Activated T-helper 1 cell treated with anti-CD3 and anti-CD28 coated beads, Interleukin-12 subunit alpha, Interleukin-12 subunit beta, Interleukin-2, Interleukin-4 antibody, amounts not matched to agents 30 ng/mL and 10 ng/mL and 1 ng/mL, durations not matched to agents 14 hours and 24 hours and 36 hours (primary cell): ENCODE measurements at regions of chr12 and their contacts with region 1.

Region 1: DNA sequence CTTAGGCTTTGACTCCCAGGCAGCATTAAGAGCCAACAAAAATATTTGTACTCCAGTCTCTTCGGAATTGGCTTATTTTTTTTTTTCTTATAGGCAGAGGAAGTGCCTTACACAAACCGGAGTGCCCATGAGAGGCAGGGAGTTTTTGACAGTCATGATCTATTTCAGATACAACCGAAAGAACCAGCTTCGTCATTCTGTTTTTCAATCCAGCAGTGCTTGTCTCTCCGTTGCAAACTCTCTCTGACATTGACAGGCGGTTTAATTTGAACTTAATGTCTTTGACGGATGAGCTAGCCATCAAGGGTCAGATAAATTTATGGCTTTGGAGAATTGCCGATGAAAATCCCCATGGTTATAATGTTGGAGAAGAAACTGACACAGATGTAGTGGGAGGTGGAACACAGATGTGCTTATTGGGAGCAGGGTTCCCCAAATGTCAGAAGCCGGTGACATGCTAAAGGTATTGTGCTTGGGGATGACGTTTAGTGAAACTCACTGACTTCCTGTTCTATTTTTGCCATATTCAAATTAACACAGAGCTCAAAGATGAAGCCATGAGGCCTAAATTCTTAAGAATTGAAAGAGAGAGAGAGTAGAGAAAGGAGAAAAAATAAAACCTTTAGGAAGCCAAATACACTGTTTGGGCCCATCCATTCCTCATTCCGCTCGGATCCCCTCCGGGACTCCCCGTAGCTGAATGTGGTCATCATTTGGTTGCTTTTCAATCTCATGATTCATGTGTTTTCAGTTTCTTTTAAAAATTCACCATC is 59.7 kb downstream of the PLXNC1 start:
- DNase-seq: peak; percentile 46
- H3K4me3 Mint-ChIP-seq: peak overlapping the region; percentile 79
- H3K27ac Mint-ChIP-seq: peak overlapping the region; percentile 100
- H3K4me1 Mint-ChIP-seq: peaks cover 73% of the 10 kb centered on the region
- H3K27me3 Mint-ChIP-seq: no peaks in the 10 kb centered on the region

Region 2: GRCh38 chr12:93785262-93786010 is 422.6 kb before region 1 on chr12:
- intact Hi-C with region 1: loop called (anchors 10 kb)
- DNase-seq: peak; percentile 53
- H3K4me3 Mint-ChIP-seq: peak overlapping the region; percentile 67
- H3K27ac Mint-ChIP-seq: peak overlapping the region; percentile 82
- H3K4me1 Mint-ChIP-seq: peaks cover 51% of the 10 kb centered on the region
- H3K27me3 Mint-ChIP-seq: no peaks in the 10 kb centered on the region

Region 3: GRCh38 chr12:94230357-94230905 is 22.4 kb after region 1 on chr12:
- intact Hi-C with region 1: loop called (anchors 2 kb)
- DNase-seq: no peak
- H3K4me3 Mint-ChIP-seq: peak overlapping the region; percentile 12
- H3K27ac Mint-ChIP-seq: no peak overlapping the region
- H3K4me1 Mint-ChIP-seq: peaks cover 12% of the 10 kb centered on the region
- H3K27me3 Mint-ChIP-seq: no peaks in the 10 kb centered on the region

Region 4: DNA sequence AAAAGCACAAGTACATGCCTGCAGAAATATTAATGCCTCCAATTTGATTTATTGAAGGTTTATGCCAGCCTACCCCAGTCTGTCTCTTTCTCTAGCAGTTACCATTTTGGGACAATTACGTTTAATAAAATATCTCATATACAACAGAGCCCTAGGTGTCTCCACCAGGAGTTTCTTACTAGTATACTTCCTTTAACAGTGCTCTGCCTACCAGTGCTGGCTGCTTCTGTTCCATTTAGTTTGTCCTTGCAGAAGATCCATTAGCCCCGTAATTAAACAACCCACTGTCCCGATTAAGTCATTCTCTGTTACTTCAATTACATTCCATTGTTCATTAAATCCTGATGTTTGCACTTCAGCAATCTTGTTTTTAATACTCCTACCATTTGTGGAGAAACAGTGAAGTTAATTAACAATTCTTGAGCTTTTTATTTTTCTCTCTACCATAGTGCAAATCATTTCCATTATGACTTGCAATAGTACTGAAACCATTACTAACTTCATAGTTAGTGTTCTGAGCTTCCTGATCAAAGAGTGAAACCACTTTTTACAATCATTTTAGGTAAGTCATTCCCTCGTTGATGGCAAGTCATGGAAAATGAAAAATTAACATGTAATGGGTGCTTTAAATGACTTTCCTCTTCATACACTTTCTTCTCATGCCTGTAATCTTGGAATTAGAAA is 61.4 kb after region 1 on chr12:
- intact Hi-C with region 1: loop called (anchors 1 kb)
- DNase-seq: no peak
- H3K4me3 Mint-ChIP-seq: peak overlapping the region; percentile 43
- H3K27ac Mint-ChIP-seq: peak overlapping the region; percentile 72
- H3K4me1 Mint-ChIP-seq: peaks cover 72% of the 10 kb centered on the region
- H3K27me3 Mint-ChIP-seq: no peaks in the 10 kb centered on the region

Region 5: GRCh38 chr12:94372461-94372860 is 164.4 kb after region 1 on chr12:
- intact Hi-C with region 1: loop called (anchors 1 kb)
- DNase-seq: no peak
- H3K4me3 Mint-ChIP-seq: peak overlapping the region; percentile 37
- H3K27ac Mint-ChIP-seq: peak overlapping the region; percentile 78
- H3K4me1 Mint-ChIP-seq: peaks cover 58% of the 10 kb centered on the region
- H3K27me3 Mint-ChIP-seq: no peaks in the 10 kb centered on the region

Region 6: DNA sequence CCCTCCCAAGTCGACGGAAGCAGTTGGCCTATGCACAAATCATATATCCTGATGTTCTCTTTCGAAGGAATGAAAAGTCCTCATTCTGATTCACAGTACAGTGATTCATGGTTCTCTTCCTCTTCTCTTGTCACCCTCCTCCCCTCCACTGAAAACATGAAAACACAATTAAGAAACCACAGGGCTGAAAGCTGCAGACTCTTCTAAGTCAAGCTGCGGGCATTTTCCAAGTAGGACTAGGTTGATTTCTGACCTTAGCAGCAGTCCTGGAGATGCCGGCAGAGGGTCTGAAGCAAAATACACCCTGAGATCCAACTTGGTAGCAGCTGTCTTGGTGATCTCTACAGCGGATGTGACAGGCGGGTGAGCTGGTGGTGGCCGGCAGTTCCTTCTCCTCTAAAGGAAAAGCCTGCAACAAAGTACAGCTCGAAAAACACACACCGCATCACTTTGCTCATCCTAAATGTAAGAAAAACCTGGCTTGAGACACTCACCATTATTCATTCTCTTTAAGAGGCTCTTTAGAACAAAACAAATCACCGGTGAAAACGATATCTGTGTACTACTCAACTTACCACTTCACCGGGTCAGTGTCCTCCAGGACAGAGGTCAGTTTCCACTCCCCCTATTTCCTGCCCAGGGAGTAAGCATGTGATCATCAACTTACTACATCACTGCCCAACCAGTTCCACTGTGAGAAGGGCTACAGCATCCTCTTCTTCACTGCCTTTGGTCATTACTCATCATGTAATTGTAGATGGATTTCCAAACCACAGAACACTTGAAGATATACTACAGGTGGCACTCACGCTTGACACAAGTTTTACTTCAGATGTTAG is 436.3 kb after region 1 on chr12:
- intact Hi-C with region 1: loop called (anchors 5 kb)
- DNase-seq: no peak
- H3K4me3 Mint-ChIP-seq: peak overlapping the region; percentile 63
- H3K27ac Mint-ChIP-seq: peak overlapping the region; percentile 7
- H3K4me1 Mint-ChIP-seq: peaks cover 46% of the 10 kb centered on the region
- H3K27me3 Mint-ChIP-seq: peaks cover 68% of the 10 kb centered on the region